Esophagus muscularis mucosa (tissue), 4 donors: ENCODE measurements at regions of chr10 and their contacts with region 1.

Region 1: DNA sequence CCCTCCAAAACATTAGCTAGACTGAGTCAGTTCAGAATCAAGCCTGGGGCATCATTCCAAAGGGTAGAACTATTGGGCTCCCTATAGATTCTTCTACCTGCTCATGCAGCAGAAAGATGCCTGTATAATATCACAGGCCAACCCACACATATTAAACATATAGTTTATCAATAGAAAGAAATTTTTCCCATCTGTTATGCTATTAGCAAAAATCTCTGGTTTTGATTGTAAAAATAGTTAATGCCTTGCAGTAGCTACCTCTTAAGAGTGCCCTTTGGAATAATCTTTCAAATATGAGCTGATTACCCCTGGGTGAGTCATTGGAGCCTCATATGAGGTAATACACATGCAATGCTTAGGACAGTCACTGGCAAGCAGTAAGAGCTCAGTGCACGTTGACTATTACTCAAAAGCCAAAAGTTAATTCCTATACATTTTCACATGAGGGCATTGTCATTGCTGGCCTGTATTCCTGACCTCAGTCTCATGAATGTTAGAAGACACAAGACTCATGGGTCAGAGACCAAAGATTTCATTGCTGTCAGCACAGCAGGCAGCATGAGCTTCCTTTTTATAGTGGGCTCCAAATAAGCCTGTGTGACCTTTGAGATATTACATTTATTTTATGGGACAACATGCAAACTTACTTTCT is 180.0 kb downstream of the FGFR2 start:
- DNase-seq: no peak
- H3K4me3 ChIP-seq: no peak overlapping the region
- H3K27ac ChIP-seq: no peak overlapping the region
- H3K4me1 ChIP-seq: peaks cover 0 to 10% (median 4%) of the 10 kb centered on the region in 4 donors
- H3K27me3 ChIP-seq: no peaks in the 10 kb centered on the region
- CTCF ChIP-seq: no peak
- EP300 ChIP-seq: no peak
- POLR2A ChIP-seq: no peak

Region 2: GRCh38 chr10:120979435-120980278 is 438.6 kb before region 1 on chr10:
- intact Hi-C with region 1: loop called (anchors 10 kb)
- DNase-seq: no peak
- H3K4me3 ChIP-seq: peak overlapping the region; percentile 45 to 55 (median 48)
- H3K27ac ChIP-seq: no peak overlapping the region
- H3K4me1 ChIP-seq: peaks cover 8 to 17% (median 14%) of the 10 kb centered on the region in 4 donors
- H3K27me3 ChIP-seq: peaks cover 0 to 34% (median 0%) of the 10 kb centered on the region in 4 donors
- CTCF ChIP-seq: no peak
- EP300 ChIP-seq: no peak
- POLR2A ChIP-seq: no peak

Region 3: GRCh38 chr10:121237718-121238117 is 180.5 kb before region 1 on chr10:
- intact Hi-C with region 1: no loop called
- DNase-seq: peak; percentile 26
- H3K4me3 ChIP-seq: no peak overlapping the region
- H3K27ac ChIP-seq: no peak overlapping the region
- H3K4me1 ChIP-seq: peaks cover 0 to 4% (median 0%) of the 10 kb centered on the region in 4 donors
- H3K27me3 ChIP-seq: no peaks in the 10 kb centered on the region
- CTCF ChIP-seq: no peak
- EP300 ChIP-seq: no peak
- POLR2A ChIP-seq: no peak

Region 4: GRCh38 chr10:121302541-121303180 is 115.6 kb before region 1 on chr10:
- intact Hi-C with region 1: no loop called
- DNase-seq: no peak
- H3K4me3 ChIP-seq: no peak overlapping the region
- H3K27ac ChIP-seq: no peak overlapping the region
- H3K4me1 ChIP-seq: peaks cover 0 to 14% (median 0%) of the 10 kb centered on the region in 4 donors
- H3K27me3 ChIP-seq: no peaks in the 10 kb centered on the region
- CTCF ChIP-seq: no peak
- EP300 ChIP-seq: no peak
- POLR2A ChIP-seq: no peak